Endothelial cell of umbilical vein (primary cell): ENCODE measurements at regions of chr2 and their contacts with region 1.

Region 1: DNA sequence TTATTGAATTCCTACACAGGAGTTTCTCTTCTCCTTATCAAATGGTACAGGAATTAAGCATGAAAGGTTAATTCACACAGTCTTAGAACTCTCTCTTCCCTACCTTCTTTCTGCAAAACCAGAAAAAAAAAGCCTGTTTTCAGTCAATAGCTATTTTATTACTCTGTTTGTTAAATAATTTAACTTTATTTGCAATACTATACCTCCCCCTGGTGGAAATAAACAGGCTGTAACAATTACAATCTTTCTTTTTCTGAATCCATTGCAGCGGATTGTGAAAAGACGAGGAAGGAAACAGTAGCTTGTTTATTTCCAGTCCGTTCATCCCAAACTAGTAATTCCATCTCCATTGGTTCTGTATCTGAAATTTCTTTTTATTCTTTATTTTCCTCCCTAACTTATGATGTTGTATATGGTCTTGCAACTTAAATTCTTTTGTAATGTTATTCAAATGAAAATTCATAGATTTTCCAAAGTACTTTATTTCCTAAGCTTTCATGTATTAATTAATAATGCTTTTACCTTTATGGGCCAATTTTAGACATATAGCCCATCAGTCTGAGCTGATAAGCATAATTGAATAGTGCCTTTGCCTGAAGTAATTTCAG is 165.2 kb downstream of the SH3BP4 start:
- DNase-seq: peak; percentile 53
- H3K4me3 ChIP-seq: no peak overlapping the region
- H3K27ac ChIP-seq: no peak overlapping the region
- H3K4me1 ChIP-seq: no peaks in the 10 kb centered on the region
- H3K27me3 ChIP-seq: peaks cover 2 to 9% of the 10 kb centered on the region in 2 experiments
- CTCF ChIP-seq: peak; percentile 35 to 37
- POLR2A ChIP-seq: no peak

Region 2: DNA sequence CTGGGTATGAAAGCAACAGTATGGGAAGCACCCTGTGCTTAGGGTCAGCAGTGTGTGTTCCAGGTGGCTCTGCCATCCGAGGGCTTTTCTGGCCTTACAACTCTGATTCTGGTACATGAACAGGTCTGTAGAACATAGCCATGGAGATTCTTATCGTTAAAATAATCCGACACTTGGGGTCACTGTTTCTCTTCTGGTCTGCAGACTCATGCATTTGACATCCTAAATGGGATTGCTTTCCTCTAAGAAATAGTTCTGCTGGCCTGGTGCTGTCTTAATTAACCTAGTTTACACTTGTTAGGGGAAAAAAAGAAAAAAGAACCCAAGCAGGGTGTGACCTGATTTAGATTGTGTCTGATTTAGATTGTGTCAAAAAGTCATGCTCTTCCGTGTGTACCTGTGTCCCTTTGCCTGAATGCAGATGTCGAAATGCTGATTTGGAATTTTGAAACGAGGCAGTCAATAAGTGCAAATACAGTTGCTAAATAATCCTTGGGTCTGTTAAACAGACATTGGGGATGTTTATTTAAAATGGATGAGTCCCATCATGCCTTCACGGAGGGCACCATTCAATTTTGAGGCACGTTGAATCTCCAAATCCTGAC is 1140.2 kb before region 1 on chr2:
- CTCF ChIA-PET with region 1: interaction called, 5 read pairs
- POLR2A ChIA-PET with region 1: no interaction called
- dilution Hi-C with region 1: no loop called
- intact Hi-C with region 1: loop called (anchors 1 kb)
- DNase-seq: peak; percentile 57
- H3K4me3 ChIP-seq: no peak overlapping the region
- H3K27ac ChIP-seq: no peak overlapping the region
- H3K4me1 ChIP-seq: peaks cover 13% of the 10 kb centered on the region
- H3K27me3 ChIP-seq: peaks cover 0 to 3% of the 10 kb centered on the region in 2 experiments
- CTCF ChIP-seq: peak; percentile 4 to 22
- POLR2A ChIP-seq: no peak

Region 3: GRCh38 chr2:234500394-234501006 is 616.5 kb before region 1 on chr2:
- CTCF ChIA-PET with region 1: interaction called, 28 read pairs
- POLR2A ChIA-PET with region 1: no interaction called
- dilution Hi-C with region 1: no loop called
- intact Hi-C with region 1: loop called (anchors 2 kb)
- DNase-seq: peak; percentile 61
- H3K4me3 ChIP-seq: no peak overlapping the region
- H3K27ac ChIP-seq: no peak overlapping the region
- H3K4me1 ChIP-seq: peaks cover 3% of the 10 kb centered on the region
- H3K27me3 ChIP-seq: peaks cover 0 to 2% of the 10 kb centered on the region in 2 experiments
- CTCF ChIP-seq: peak; percentile 51 to 58
- POLR2A ChIP-seq: no peak

Region 4: GRCh38 chr2:234544659-234545611 is 572.1 kb before region 1 on chr2:
- CTCF ChIA-PET with region 1: interaction called, 216 read pairs
- POLR2A ChIA-PET with region 1: no interaction called
- dilution Hi-C with region 1: loop called (anchors 25 kb)
- intact Hi-C with region 1: loop called (anchors 1 kb)
- DNase-seq: peak; percentile 38
- H3K4me3 ChIP-seq: no peak overlapping the region
- H3K27ac ChIP-seq: no peak overlapping the region
- H3K4me1 ChIP-seq: peaks cover 6% of the 10 kb centered on the region
- H3K27me3 ChIP-seq: peaks cover 0 to 6% of the 10 kb centered on the region in 2 experiments
- CTCF ChIP-seq: peak; percentile 71 to 96
- POLR2A ChIP-seq: no peak

Region 5: GRCh38 chr2:234564699-234565098 is 552.3 kb before region 1 on chr2:
- CTCF ChIA-PET with region 1: interaction called, 15 read pairs
- POLR2A ChIA-PET with region 1: no interaction called
- dilution Hi-C with region 1: loop called (anchors 25 kb)
- intact Hi-C with region 1: no loop called
- DNase-seq: peak; percentile 12
- H3K4me3 ChIP-seq: no peak overlapping the region
- H3K27ac ChIP-seq: no peak overlapping the region
- H3K4me1 ChIP-seq: no peaks in the 10 kb centered on the region
- H3K27me3 ChIP-seq: peaks cover 0 to under 1% of the 10 kb centered on the region in 2 experiments
- CTCF ChIP-seq: peak in 1 of 2 donors; percentile 4
- POLR2A ChIP-seq: no peak

Region 6: DNA sequence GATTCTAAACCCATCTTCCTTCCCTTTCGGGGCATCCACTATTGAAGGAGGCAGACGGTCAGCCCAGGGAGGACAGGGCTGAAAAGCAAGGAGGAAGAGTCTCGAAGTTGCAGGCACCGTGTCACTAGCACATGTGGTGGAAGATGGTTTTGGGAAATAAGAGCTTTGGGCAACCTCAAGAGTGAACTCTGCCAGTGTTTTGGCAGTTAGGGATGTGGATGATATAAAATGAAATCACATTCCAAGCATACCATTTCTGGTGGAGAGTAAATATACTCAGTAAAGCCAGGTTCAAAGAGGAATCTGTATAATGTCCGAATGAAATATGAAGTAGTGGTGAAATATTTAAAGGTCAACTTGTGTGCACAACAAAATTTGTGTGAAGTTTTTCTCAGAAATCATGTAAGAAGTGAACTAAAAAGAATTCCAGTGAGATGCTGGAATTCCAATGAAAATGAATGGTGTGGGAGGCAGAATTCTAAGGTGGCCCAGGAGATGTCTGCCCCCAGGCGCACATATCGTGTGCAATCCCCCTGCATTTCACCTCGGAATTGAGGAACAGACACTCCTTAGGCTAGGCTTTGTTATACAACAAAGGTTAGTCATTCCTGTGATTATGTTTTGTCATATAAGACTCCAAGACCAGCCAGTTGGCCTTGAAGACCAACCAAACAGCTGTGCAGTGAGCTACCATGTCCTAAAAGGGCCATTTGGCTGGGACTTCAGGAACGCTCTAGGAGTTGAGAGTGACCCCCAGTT is 18.1 kb before region 1 on chr2:
- CTCF ChIA-PET with region 1: interaction called, 11 read pairs
- POLR2A ChIA-PET with region 1: no interaction called
- dilution Hi-C with region 1: no loop called
- intact Hi-C with region 1: no loop called
- DNase-seq: no peak
- H3K4me3 ChIP-seq: no peak overlapping the region
- H3K27ac ChIP-seq: no peak overlapping the region
- H3K4me1 ChIP-seq: no peaks in the 10 kb centered on the region
- H3K27me3 ChIP-seq: peaks cover 0 to 3% of the 10 kb centered on the region in 2 experiments
- CTCF ChIP-seq: no peak
- POLR2A ChIP-seq: no peak

Region 7: DNA sequence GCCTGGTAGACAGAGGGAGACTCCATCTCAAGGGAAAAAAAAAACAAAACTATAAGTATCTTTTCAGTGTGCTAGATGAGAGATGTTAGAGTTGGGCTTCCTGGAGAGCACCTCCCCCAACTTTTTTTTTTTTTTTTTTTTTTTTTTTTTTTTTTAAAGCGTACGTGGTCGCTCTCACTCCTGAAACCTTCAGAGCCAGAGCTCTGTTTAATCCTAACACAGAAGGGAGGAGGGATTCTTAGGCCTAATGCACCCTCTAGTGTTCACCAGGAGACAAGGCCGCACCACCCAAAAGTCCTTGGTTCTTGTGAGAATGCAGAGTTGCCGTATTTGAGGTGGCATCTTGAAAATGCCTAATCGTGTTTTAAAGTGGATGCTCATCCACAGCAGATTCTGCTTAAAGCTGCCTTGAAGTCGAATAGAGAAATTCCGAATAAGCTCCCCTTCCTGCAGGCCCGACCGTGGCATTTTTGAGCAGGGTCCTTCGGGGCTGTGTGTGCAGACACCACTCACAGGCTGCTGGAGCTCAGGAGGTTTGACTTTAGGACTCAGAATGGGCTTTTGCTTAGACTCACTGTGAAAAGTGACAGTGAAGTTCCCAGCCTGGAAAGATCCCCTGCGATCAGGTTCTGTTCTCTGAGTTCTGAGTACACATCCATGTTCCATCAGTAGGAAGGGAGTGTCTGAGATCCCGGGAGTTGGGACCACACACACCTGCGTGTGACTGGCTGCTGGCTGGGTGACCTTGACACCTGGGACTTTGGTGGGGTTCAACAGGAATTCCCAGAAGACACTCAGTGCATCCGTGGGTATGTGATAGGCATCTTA is 629.5 kb after region 1 on chr2:
- CTCF ChIA-PET with region 1: interaction called, 13 read pairs
- POLR2A ChIA-PET with region 1: no interaction called
- dilution Hi-C with region 1: no loop called
- intact Hi-C with region 1: no loop called
- DNase-seq: peak; percentile 77
- H3K4me3 ChIP-seq: no peak overlapping the region
- H3K27ac ChIP-seq: no peak overlapping the region
- H3K4me1 ChIP-seq: no peaks in the 10 kb centered on the region
- H3K27me3 ChIP-seq: no peaks in the 10 kb centered on the region
- CTCF ChIP-seq: peak; percentile 80 to 82
- POLR2A ChIP-seq: no peak